Naive thymus-derived CD4-positive, alpha-beta T cell (primary cell): ENCODE measurements at regions of chr1 and their contacts with region 1.

Region 1: GRCh38 chr1:239413916-239414315 is 27.5 kb downstream of the CHRM3 start:
- DNase-seq: no peak
- ATAC-seq: no peak
- H3K4me3 ChIP-seq: no peak overlapping the region
- H3K4me3 Mint-ChIP-seq: no peak overlapping the region
- H3K27ac ChIP-seq: no peak overlapping the region
- H3K27ac Mint-ChIP-seq: peak overlapping the region in 2 of 9 donors; percentile 65 to 87
- H3K4me1 ChIP-seq: no peaks in the 10 kb centered on the region
- H3K4me1 Mint-ChIP-seq: no peaks in the 10 kb centered on the region
- H3K27me3 ChIP-seq: no peaks in the 10 kb centered on the region
- H3K27me3 Mint-ChIP-seq: no peaks in the 10 kb centered on the region

Region 2: DNA sequence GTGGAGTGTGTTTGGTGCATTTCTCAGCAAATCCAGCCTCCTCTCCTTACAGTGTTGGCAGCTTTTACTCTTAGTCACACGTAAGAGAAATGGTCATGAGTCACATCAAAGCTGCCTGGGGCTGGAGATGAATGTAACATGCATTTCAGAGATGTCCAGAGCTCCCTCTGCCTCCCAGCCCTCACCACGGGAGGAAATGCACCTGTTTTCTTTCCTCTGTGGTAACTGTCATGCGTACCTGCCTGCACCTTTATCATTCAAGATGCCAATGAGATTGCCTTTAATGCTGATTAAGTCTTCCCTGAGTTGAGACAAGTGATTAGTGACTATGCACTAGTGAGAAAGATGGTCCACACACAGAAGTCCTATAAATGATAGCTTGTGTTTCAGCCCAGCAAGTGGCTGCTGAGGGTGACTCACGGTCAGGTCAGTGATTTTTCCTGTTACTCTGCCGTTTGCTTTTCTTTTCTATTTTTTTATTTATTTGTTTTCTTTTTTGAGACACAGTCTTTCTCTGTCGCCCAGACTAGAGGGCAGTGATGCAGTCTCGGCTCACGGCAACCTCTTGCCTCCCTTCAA is 400.5 kb after region 1 on chr1:
- CTCF ChIA-PET with region 1: no interaction called
- POLR2A ChIA-PET with region 1: no interaction called
- intact Hi-C with region 1: loop called in 1 of 2 experiments (anchors 5 kb)
- DNase-seq: no peak
- ATAC-seq: peak; percentile 30
- H3K4me3 ChIP-seq: no peak overlapping the region
- H3K4me3 Mint-ChIP-seq: no peak overlapping the region
- H3K27ac ChIP-seq: no peak overlapping the region
- H3K27ac Mint-ChIP-seq: peak overlapping the region in 2 of 9 donors; percentile 28 to 31
- H3K4me1 ChIP-seq: peaks cover 4 to 11% of the 10 kb centered on the region in 2 donors
- H3K4me1 Mint-ChIP-seq: peaks cover 18 to 32% (median 22%) of the 10 kb centered on the region in 7 donors
- H3K27me3 ChIP-seq: no peaks in the 10 kb centered on the region
- H3K27me3 Mint-ChIP-seq: no peaks in the 10 kb centered on the region